Activated naive CD8-positive, alpha-beta T cell treated with anti-CD3 and anti-CD28 coated beads, Interleukin-2, amount 10 ng/mL, durations not matched to agents 7 days and 5 days (primary cell): ENCODE measurements at regions of chr2 and their contacts with region 1.

Region 1: DNA sequence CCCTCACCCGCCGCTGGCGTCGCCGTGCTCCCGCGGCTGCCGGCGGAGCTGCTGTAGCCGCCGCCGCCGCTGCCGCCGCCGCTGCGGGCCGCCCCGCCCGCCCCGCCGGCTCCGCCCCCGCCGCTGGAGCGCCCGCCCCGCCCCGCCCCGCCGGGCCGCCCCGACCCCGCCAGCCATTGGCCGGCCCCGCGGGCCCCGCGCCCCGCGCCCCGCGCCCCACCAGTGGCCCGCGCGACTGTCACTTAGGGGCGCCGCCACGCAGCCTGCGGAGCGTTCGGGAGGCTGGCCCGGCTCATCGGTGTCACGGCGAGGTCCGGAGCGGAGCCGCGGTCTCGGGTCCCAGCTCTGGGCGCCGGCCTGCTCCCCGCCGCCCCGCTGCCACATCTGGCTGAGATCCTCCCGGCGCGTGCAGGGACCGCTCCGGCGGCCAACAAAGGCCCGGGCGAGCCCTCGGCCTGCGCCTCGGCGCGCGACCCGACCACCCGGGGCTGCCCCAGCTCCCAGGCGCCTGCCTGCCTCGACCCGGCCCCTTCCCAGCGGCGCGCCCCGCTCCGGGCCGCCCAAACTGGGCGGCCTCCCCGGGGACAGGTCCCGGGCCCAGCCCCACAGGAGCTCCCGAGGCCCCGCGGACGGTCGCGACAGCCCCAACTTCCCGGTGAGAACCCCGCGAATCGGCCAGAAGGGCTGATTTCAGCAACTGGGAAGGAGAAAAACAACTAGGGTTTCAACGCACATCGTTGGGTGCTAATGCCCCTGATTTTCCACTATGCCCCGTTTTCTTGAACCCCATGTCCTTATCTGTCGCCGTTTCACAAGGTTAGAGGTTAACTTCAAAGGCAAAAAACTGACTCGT is at the start of gene MGAT4A:
- DNase-seq: peak; percentile 88
- ATAC-seq: peak; percentile 85
- H3K4me3 Mint-ChIP-seq: peak within 1 kb of the TSS; percentile 85
- H3K27ac Mint-ChIP-seq: peak within 1 kb of the TSS; percentile 90
- H3K4me1 Mint-ChIP-seq: peaks cover 56% of the 10 kb centered on the region
- H3K27me3 Mint-ChIP-seq: no peaks in the 10 kb centered on the region
- total RNA-seq, gene MGAT4A: 124 to 152 TPM

Region 2: GRCh38 chr2:98649135-98649991 is 81.9 kb before region 1 on chr2:
- POLR2A ChIA-PET with region 1: interaction called, 13 read pairs
- DNase-seq: peak; percentile 57
- ATAC-seq: peak; percentile 93
- H3K4me3 Mint-ChIP-seq: peak overlapping the region; percentile 18
- H3K27ac Mint-ChIP-seq: peak overlapping the region; percentile 31
- H3K4me1 Mint-ChIP-seq: peaks cover 48% of the 10 kb centered on the region
- H3K27me3 Mint-ChIP-seq: no peaks in the 10 kb centered on the region

Region 3: DNA sequence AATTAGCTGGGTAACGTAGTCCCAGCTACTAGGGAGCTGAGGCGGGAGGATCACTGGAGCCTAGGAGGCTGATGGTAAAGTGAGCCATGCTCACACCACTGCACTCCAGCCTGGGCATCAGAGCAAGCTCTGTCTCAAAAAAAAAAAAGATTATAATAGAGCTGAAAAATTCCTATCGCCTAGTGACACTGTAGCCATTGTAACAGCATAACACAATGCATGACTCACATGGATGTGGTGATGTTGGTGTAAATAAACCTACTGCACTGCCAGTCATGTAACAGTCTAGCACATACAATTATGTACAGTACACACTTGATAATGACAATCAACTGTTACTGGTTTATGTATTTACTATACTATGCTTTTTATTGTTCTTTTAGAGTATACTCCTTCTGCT is 40.0 kb before region 1 on chr2:
- POLR2A ChIA-PET with region 1: interaction called, 22 read pairs
- DNase-seq: no peak
- ATAC-seq: no peak
- H3K4me3 Mint-ChIP-seq: no peak overlapping the region
- H3K27ac Mint-ChIP-seq: peak overlapping the region; percentile 36
- H3K4me1 Mint-ChIP-seq: peaks cover 49% of the 10 kb centered on the region
- H3K27me3 Mint-ChIP-seq: no peaks in the 10 kb centered on the region

Region 4: DNA sequence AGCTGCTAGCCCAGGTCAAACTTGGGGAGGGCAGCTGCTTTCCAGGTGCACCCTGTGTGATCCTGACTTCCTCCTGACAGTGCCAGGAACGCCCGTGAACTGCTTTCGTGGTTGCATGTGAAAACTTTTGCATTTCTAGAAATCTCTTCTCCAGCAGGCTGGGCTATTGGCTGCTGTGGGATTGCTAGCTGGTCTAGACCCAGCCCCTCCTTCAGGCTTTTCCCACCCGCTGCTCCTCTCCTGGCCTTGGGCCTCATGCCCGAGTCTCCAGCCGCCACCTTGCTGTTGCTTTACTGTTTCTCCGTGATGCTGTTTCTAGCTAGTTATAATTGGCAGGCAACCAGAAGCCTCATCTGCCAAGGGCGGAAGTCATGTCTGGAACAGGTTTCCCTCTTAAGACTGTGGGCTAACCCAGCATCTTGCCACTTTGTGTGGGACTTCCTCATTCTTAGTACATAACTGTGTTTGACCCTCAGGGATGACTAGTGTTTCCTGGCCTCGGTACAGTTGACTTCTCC is 26.7 kb after region 1 on chr2:
- POLR2A ChIA-PET with region 1: interaction called, 18 read pairs
- DNase-seq: peak; percentile 56
- ATAC-seq: peak; percentile 92
- H3K4me3 Mint-ChIP-seq: peak overlapping the region; percentile 81
- H3K27ac Mint-ChIP-seq: peak overlapping the region; percentile 94
- H3K4me1 Mint-ChIP-seq: peaks cover 42% of the 10 kb centered on the region
- H3K27me3 Mint-ChIP-seq: no peaks in the 10 kb centered on the region

Region 5: GRCh38 chr2:98828793-98829371 is 97.6 kb after region 1 on chr2:
- POLR2A ChIA-PET with region 1: interaction called, 13 read pairs
- DNase-seq: peak; percentile 32
- ATAC-seq: peak; percentile 49
- H3K4me3 Mint-ChIP-seq: peak overlapping the region; percentile 54
- H3K27ac Mint-ChIP-seq: peak overlapping the region; percentile 71
- H3K4me1 Mint-ChIP-seq: peaks cover 36% of the 10 kb centered on the region
- H3K27me3 Mint-ChIP-seq: peaks cover 2% of the 10 kb centered on the region